Posterior cingulate gyrus (tissue), 11 donors: ENCODE measurements at regions of chr10 and their contacts with region 1.

Region 1: GRCh38 chr10:43105102-43105785 is 28.4 kb downstream of the RET start:
- DNase-seq: peak; percentile 57 to 96 (median 74)

Region 2: DNA sequence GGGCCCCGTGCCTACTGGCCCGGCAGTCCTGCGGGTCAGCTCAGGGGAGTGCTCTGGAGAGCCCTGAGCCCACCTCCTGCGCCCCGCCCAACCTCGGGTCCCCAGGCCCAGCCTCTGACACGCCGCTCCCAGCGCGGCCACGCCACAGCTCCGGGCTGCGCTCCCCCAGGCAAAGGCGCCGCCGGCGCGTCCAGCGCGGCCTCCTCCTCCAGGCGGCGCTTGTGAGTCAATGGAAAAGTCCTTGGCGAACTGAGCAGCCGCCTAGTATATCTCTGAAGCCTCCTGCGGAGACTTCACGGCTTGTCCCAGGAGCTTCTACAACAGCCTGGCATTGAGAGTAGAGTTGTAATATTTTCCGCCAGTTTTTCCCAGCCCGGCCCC is 352.1 kb before region 1 on chr10:
- intact Hi-C with region 1: loop called (anchors 2 kb)
- DNase-seq: peak in 9 of 10 donors; percentile 39 to 95 (median 70)

Region 3: DNA sequence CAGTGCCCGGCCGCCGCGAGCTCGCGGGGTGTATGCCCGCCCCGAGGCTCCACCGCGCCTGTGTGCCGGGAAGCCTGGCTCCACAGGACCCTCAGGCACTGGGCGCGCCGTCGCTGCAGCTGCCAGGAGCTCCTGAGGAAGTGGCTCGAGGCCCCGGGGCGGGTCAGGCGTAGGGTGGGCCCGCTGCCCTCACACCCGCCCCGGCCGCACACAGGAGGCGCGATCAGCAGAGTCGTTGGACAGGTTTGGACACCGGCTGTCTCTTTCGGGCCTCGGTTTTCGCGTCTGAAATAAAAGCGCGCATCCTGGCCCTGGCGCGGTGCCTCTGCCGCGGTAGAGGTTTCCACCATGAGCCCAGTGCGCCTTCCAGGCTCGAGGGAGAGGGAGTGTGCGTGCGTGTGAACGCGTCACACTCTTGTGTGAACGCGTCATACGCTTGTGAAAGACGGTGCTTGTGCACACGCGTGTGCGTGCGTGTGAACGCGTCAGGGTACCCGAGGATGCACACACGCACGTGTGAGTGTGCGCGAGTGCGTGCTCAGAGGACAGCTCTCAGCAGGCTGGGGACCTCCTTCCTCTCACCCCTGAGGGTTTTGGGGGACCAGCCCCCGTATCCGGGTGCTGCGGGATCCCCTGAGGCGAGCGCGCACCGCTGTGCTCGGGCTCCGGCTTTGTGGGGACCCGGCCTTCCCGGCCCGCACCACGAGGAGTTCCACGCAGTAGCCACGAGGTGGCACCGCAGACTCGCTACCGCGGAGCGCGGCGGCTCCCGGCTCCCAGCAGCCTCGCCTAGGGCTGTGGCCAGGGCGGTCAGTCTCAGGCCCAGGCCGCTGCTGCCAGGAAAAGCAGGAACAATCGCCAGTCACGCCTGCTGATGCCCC is 238.9 kb before region 1 on chr10:
- intact Hi-C with region 1: loop called (anchors 1 kb)
- DNase-seq: peak; percentile 63 to 98 (median 85)